Right ventricle myocardium superior (tissue), 1 donor: ENCODE measurements at regions of chr16 and their contacts with region 1.

Region 1: GRCh38 chr16:31032736-31033708 is at the start of gene STX4:
- DNase-seq: peak; percentile 99
- ATAC-seq: peak; percentile 98
- total RNA-seq, gene STX4: 39.5 TPM

Region 2: GRCh38 chr16:30761928-30762810 is 270.9 kb before region 1 on chr16 and contains the starts of genes CFAP119 and RNF40:
- intact Hi-C with region 1: no loop called
- DNase-seq: peak; percentile 97
- ATAC-seq: peak; percentile 97
- total RNA-seq, gene CFAP119: 0.46 TPM
- total RNA-seq, gene RNF40: 29.4 TPM

Region 3: GRCh38 chr16:31073968-31074813 is 41.2 kb after region 1 on chr16 and contains the starts of genes ZNF646 and ZNF668:
- intact Hi-C with region 1: loop called (anchors 2 kb)
- DNase-seq: peak; percentile 99
- ATAC-seq: peak; percentile 96
- total RNA-seq, gene ZNF646: 8.3 TPM
- total RNA-seq, gene ZNF668: 4.4 TPM

Region 4: GRCh38 chr16:31090540-31090939 is 57.5 kb after region 1 on chr16:
- intact Hi-C with region 1: no loop called
- DNase-seq: no peak
- ATAC-seq: no peak

Region 5: DNA sequence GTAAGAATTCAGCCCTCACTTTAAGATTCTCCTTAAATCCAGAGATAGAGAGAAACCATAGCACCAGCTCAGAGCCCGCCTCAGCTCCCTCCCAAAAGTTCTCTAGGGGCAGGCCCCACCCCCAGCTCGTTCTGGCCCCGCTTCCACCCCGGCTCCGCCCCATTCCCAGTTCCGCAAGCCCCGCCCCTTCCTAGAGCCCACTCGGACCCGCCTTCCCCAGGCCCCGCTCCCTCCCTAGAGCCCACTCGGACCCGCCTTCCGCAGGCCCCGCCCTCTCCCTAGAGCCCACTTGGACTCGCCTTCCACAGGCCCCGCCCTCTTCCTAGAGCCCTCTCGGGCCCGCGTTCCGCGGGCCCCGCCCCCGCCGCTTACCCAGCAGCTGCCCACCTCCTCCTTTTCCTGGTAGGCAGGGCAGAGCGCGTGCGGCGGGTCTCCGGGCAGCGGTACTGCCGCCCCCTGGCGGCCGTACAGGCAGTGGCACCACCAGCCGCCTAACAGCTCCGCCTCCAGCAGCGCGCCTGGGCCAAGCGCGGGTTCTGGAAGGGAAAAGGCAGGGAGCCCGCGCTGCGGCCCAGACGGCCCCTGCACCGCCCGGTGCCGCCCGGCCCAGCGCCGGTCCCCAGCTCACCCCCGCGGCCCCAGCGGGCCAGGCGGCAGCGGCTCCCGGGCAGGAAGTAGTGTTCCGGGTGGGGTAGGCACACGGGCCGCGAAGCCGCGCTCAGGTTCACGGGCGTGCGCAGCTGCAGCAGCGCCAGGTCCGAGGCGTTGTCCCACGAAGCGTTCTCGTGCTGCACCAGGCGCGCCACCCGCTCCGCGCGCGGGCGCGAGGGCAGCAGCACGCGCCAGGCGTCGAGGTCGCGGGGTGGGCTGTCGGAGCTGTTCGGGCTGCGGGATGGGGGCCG is 109.3 kb after region 1 on chr16:
- intact Hi-C with region 1: loop called (anchors 5 kb)
- DNase-seq: peak; percentile 99
- ATAC-seq: peak; percentile 96

Region 6: GRCh38 chr16:31179747-31180459 is 146.9 kb after region 1 on chr16 and contains the start of gene FUS:
- intact Hi-C with region 1: no loop called
- DNase-seq: peak; percentile 95
- ATAC-seq: peak; percentile 89
- total RNA-seq, gene FUS: 79.3 TPM